ENCODE measurements at regions of chr11 and their contacts with region 1.

Region 1: GRCh38 chr11:125568970-125569914 is at the start of gene EI24:
- DNase-seq: peak; percentile 90
- ATAC-seq: peak; percentile 98
- H3K4me3 ChIP-seq: peak within 1 kb of the TSS; percentile 99
- H3K27ac ChIP-seq: peak within 1 kb of the TSS; percentile 76
- H3K4me1 ChIP-seq: peaks cover 12% of the 10 kb centered on the region
- H3K27me3 ChIP-seq: no peaks in the 10 kb centered on the region; the same call in 1 of the 2 replicates
- CTCF ChIP-seq: peak; percentile 70
- POLR2A ChIP-seq: peak; percentile 71
- RAD21 ChIP-seq: peak; percentile 48
- total RNA-seq, gene EI24: 95.9 and 122 TPM in 2 replicates

Region 2: DNA sequence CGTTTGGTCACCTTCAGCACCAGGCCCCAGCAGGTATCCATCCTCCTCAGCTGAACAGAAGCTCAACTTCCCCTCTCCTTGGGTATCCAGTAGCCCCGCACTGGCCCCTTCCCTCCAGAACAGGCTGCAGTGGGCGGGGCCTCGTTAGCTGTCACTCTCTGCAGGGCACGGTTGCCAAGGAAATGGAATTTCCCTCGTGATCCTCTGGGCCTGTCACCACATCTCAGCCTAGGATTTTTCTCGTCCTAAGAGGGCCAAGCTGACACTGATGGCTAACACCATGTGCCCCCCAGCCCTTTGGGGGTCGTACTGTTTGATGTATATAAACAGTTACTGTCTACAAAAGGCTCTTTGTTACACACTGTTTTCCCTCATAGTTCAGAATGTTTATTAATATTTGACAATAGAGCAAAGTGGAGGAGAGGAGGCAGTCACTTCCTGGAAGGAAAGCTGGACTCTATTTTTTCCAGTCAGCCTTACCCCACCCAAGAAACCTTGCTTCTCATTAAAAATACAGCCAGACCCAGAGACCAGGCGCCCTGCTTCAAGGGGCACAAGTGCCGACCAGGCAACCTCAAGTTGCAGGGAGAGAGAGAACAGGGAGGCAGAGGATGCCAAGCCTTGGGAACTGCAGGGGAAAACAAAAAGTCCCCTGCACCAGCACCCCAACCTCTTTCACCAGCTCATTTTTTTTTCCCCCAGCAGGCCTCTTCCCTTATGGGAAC is 117.7 kb before region 1 on chr11:
- CTCF ChIA-PET with region 1: no interaction called
- POLR2A ChIA-PET with region 1: no interaction called
- dilution Hi-C with region 1: no loop called
- in situ Hi-C with region 1: no loop called
- intact Hi-C with region 1: no loop called
- DNase-seq: peak; percentile 25
- ATAC-seq: peak; percentile 64
- H3K4me3 ChIP-seq: no peak overlapping the region
- H3K27ac ChIP-seq: peak overlapping the region; percentile 60; the same call in 1 of the 2 replicates
- H3K4me1 ChIP-seq: peaks cover 13% of the 10 kb centered on the region
- H3K27me3 ChIP-seq: no peaks in the 10 kb centered on the region
- CTCF ChIP-seq: no peak
- POLR2A ChIP-seq: no peak
- RAD21 ChIP-seq: no peak

Region 3: DNA sequence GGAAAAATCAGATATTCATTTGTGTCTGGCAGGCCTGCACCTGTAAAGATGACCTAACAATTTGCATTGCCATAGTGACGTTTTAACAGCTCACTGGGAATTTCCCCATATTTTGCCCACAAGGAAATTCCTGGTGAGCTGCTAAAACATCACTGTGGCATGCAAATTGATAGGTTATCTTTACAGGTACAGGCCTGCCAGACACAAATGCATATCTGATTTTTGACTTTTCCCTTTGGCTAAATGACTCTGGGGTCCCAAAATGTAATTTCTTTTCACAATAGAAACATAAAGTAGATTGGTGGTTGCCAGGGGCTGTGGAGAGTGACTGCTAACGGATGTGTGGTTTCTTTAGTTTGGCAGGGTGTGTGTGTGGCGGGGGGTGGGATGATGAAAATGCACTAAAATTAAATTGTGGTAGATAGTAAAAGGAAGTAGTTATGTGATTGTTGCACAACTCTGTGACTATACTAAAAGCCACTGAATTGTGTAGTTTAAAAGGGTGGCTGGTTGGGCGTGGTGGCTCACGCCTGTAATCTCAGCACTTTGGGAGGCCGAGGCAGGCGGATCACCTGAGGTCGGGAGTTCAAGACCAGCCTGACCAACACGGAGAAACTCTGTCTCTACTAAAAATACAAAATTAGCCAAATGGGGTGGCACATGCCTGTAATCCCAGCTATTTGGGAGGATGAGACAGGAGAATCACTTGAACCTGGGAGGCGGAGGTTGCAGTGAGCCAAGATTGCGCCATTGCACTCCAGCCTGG is 54.7 kb before region 1 on chr11:
- CTCF ChIA-PET with region 1: interaction called, 3 read pairs
- POLR2A ChIA-PET with region 1: no interaction called
- dilution Hi-C with region 1: no loop called
- in situ Hi-C with region 1: no loop called
- intact Hi-C with region 1: loop called (anchors 5 kb)
- DNase-seq: peak; percentile 46
- ATAC-seq: no peak
- H3K4me3 ChIP-seq: no peak overlapping the region
- H3K27ac ChIP-seq: no peak overlapping the region
- H3K4me1 ChIP-seq: no peaks in the 10 kb centered on the region
- H3K27me3 ChIP-seq: no peaks in the 10 kb centered on the region; the same call in 1 of the 2 replicates
- CTCF ChIP-seq: no peak
- POLR2A ChIP-seq: no peak
- RAD21 ChIP-seq: no peak